CD14-positive monocyte (primary cell): ENCODE measurements at regions of chr17 and their contacts with region 1.

Region 1: GRCh38 chr17:7589204-7589868 is 558 bp downstream of the SOX15 start:
- DNase-seq: peak; percentile 81 to 84 (median 83)
- H3K4me3 ChIP-seq: peak overlapping the region in 1 of 3 experiments; percentile 58
- H3K4me3 Mint-ChIP-seq: no peak overlapping the region
- H3K27ac ChIP-seq: peak overlapping the region in 1 of 2 donors; percentile 76
- H3K27ac Mint-ChIP-seq: peak overlapping the region in 2 of 7 donors; percentile 15 to 25
- H3K4me1 ChIP-seq: peaks cover 45 to 55% of the 10 kb centered on the region in 2 donors
- H3K4me1 Mint-ChIP-seq: peaks cover 33% of the 10 kb centered on the region
- H3K27me3 ChIP-seq: no peaks in the 10 kb centered on the region
- H3K27me3 Mint-ChIP-seq: peaks cover 0 to 2% (median 0%) of the 10 kb centered on the region in 3 donors
- CTCF ChIP-seq: peak; percentile 88

Region 2: GRCh38 chr17:6831661-6832263 is 757.6 kb before region 1 on chr17 and contains the start of gene TEKT1:
- intact Hi-C with region 1: no loop called
- DNase-seq: peak; percentile 80 to 92 (median 90)
- H3K4me3 ChIP-seq: peak within 1 kb of the TSS; percentile 18 to 65 (median 38)
- H3K4me3 Mint-ChIP-seq: peak within 1 kb of the TSS; percentile 82 to 95
- H3K27ac ChIP-seq: no peak within 1 kb of the TSS
- H3K27ac Mint-ChIP-seq: peak within 1 kb of the TSS in 6 of 7 donors; percentile 75 to 94 (median 90)
- H3K4me1 ChIP-seq: peaks cover 13 to 15% of the 10 kb centered on the region in 2 donors
- H3K4me1 Mint-ChIP-seq: peaks cover 17% of the 10 kb centered on the region
- H3K27me3 ChIP-seq: peaks cover 39 to 57% of the 10 kb centered on the region in 2 donors
- H3K27me3 Mint-ChIP-seq: peaks cover 39 to 49% (median 47%) of the 10 kb centered on the region in 3 donors
- CTCF ChIP-seq: no peak
- polyA plus RNA-seq, gene TEKT1: not detected

Region 3: GRCh38 chr17:7502987-7503386 is 86.3 kb before region 1 on chr17:
- intact Hi-C with region 1: loop called in 1 of 2 experiments (anchors 5 kb)
- DNase-seq: no peak
- H3K4me3 ChIP-seq: no peak overlapping the region
- H3K4me3 Mint-ChIP-seq: no peak overlapping the region
- H3K27ac ChIP-seq: no peak overlapping the region
- H3K27ac Mint-ChIP-seq: peak overlapping the region in 2 of 7 donors; percentile 48 to 74
- H3K4me1 ChIP-seq: no peaks in the 10 kb centered on the region
- H3K4me1 Mint-ChIP-seq: no peaks in the 10 kb centered on the region
- H3K27me3 ChIP-seq: no peaks in the 10 kb centered on the region
- H3K27me3 Mint-ChIP-seq: peaks cover 0 to 1% (median 1%) of the 10 kb centered on the region in 3 donors
- CTCF ChIP-seq: peak; percentile 40

Region 4: DNA sequence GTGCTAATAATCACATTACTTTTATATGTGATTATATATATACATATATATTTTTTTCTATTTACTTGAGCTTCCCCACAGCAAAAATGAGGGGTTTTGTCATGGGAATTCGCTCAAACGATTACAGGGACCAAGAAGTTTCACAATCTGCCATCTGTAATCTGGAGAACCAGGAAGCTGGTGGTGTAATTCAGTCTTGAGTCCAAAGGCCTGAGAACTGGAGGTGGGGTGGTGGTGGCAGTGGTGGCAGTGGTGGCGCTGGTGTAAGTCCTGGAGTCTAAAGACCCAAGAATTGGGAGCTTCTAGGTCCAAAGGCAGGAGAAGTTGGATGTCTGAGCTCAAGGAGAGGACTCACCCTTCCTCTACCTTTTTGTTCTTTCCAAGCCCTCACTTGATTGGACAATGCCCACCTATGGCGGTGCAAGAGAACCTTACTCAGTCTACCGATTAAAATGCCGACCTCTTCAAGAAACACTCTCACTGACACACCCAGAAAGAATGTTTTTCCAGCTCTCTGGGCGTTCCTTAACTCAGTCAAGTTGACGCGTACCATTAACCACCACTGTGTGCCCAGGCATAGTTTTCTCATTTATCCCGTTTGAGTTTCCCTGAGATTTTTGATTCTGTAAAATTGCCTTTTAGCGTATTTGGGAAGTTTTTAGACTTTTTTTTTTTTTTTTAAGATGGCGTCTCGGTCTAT is 73.3 kb before region 1 on chr17:
- intact Hi-C with region 1: loop called in 1 of 2 experiments (anchors 2 kb)
- DNase-seq: peak; percentile 24 to 67 (median 60)
- H3K4me3 ChIP-seq: peak overlapping the region in 1 of 3 experiments; percentile 17
- H3K4me3 Mint-ChIP-seq: peak overlapping the region in 1 of 2 donors; percentile 39
- H3K27ac ChIP-seq: peak overlapping the region; percentile 41 to 62
- H3K27ac Mint-ChIP-seq: peak overlapping the region; percentile 52 to 88 (median 80)
- H3K4me1 ChIP-seq: peaks cover 16 to 21% of the 10 kb centered on the region in 2 donors
- H3K4me1 Mint-ChIP-seq: peaks cover 23% of the 10 kb centered on the region
- H3K27me3 ChIP-seq: no peaks in the 10 kb centered on the region
- H3K27me3 Mint-ChIP-seq: peaks cover 0 to 2% (median 0%) of the 10 kb centered on the region in 3 donors
- CTCF ChIP-seq: no peak

Region 5: GRCh38 chr17:7572588-7573323 is 16.6 kb before region 1 on chr17:
- intact Hi-C with region 1: loop called in 1 of 2 experiments (anchors 2 kb)
- DNase-seq: peak; percentile 99 to 100 (median 100)
- H3K4me3 ChIP-seq: peak overlapping the region; percentile 60 to 100 (median 95)
- H3K4me3 Mint-ChIP-seq: peak overlapping the region; percentile 97 to 98
- H3K27ac ChIP-seq: peak overlapping the region; percentile 99
- H3K27ac Mint-ChIP-seq: peak overlapping the region; percentile 98 to 100 (median 99)
- H3K4me1 ChIP-seq: peaks cover 48 to 52% of the 10 kb centered on the region in 2 donors
- H3K4me1 Mint-ChIP-seq: peaks cover 54% of the 10 kb centered on the region
- H3K27me3 ChIP-seq: no peaks in the 10 kb centered on the region
- H3K27me3 Mint-ChIP-seq: peaks cover 0 to 9% (median 2%) of the 10 kb centered on the region in 3 donors
- CTCF ChIP-seq: no peak

Region 6: GRCh38 chr17:7613769-7614421 is 24.6 kb after region 1 on chr17:
- intact Hi-C with region 1: no loop called
- DNase-seq: no peak
- H3K4me3 ChIP-seq: peak overlapping the region; percentile 59 to 82 (median 76)
- H3K4me3 Mint-ChIP-seq: peak overlapping the region; percentile 83 to 92
- H3K27ac ChIP-seq: peak overlapping the region; percentile 14 to 69
- H3K27ac Mint-ChIP-seq: peak overlapping the region; percentile 68 to 92 (median 85)
- H3K4me1 ChIP-seq: peaks cover 25 to 34% of the 10 kb centered on the region in 2 donors
- H3K4me1 Mint-ChIP-seq: peaks cover 38% of the 10 kb centered on the region
- H3K27me3 ChIP-seq: no peaks in the 10 kb centered on the region
- H3K27me3 Mint-ChIP-seq: peaks cover 0 to 2% (median 1%) of the 10 kb centered on the region in 3 donors
- CTCF ChIP-seq: no peak